IMR-90 (cell line): ENCODE measurements at regions of chr10 and their contacts with region 1.

Region 1: GRCh38 chr10:27446091-27446918 is 57.8 kb upstream of the RAB18 start:
- DNase-seq: peak; percentile 47
- ATAC-seq: peak; percentile 90
- H3K4me3 ChIP-seq: no peak overlapping the region
- H3K27ac ChIP-seq: peak overlapping the region; percentile 74; the same call in 1 of the 2 replicates
- H3K4me1 ChIP-seq: no peaks in the 10 kb centered on the region
- H3K27me3 ChIP-seq: no peaks in the 10 kb centered on the region; the same call in 1 of the 2 replicates
- CTCF ChIP-seq: peak; percentile 56
- POLR2A ChIP-seq: no peak
- RAD21 ChIP-seq: peak; percentile 44

Region 2: DNA sequence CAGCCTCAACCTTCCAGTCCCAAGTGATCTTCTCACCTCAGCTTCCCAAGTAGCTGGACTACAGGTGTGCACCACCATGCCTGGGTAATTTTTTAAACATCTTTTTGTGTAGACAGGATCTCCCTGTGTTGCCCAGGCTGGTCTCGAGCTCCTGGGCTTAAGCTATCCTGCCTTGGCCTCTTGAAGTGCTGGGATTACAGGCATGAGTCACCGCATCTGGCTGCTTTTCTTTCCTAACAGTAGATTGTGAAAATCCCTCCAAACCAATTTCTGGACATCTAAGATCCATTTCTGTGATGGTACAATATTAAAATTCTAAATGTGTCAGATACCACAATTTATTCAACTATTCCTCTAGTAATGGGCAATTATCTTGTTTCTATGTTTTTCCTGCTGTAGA is 96.5 kb after region 1 on chr10:
- CTCF ChIA-PET with region 1: no interaction called
- POLR2A ChIA-PET with region 1: no interaction called
- dilution Hi-C with region 1: no loop called
- in situ Hi-C with region 1: no loop called
- intact Hi-C with region 1: loop called (anchors 10 kb)
- DNase-seq: peak; percentile 68
- ATAC-seq: peak; percentile 87
- H3K4me3 ChIP-seq: no peak overlapping the region
- H3K27ac ChIP-seq: no peak overlapping the region
- H3K4me1 ChIP-seq: peaks cover 2% of the 10 kb centered on the region
- H3K27me3 ChIP-seq: no peaks in the 10 kb centered on the region
- CTCF ChIP-seq: no peak
- POLR2A ChIP-seq: no peak
- RAD21 ChIP-seq: no peak

Region 3: GRCh38 chr10:27661514-27662286 is 215.4 kb after region 1 on chr10:
- CTCF ChIA-PET with region 1: no interaction called
- POLR2A ChIA-PET with region 1: no interaction called
- dilution Hi-C with region 1: no loop called
- in situ Hi-C with region 1: no loop called
- intact Hi-C with region 1: loop called (anchors 1 kb)
- DNase-seq: no peak
- ATAC-seq: no peak
- H3K4me3 ChIP-seq: no peak overlapping the region
- H3K27ac ChIP-seq: no peak overlapping the region
- H3K4me1 ChIP-seq: peaks cover 2% of the 10 kb centered on the region; the same call in 1 of the 2 replicates
- H3K27me3 ChIP-seq: peaks cover 2% of the 10 kb centered on the region; the same call in 1 of the 2 replicates
- CTCF ChIP-seq: no peak
- POLR2A ChIP-seq: no peak
- RAD21 ChIP-seq: no peak

Region 4: DNA sequence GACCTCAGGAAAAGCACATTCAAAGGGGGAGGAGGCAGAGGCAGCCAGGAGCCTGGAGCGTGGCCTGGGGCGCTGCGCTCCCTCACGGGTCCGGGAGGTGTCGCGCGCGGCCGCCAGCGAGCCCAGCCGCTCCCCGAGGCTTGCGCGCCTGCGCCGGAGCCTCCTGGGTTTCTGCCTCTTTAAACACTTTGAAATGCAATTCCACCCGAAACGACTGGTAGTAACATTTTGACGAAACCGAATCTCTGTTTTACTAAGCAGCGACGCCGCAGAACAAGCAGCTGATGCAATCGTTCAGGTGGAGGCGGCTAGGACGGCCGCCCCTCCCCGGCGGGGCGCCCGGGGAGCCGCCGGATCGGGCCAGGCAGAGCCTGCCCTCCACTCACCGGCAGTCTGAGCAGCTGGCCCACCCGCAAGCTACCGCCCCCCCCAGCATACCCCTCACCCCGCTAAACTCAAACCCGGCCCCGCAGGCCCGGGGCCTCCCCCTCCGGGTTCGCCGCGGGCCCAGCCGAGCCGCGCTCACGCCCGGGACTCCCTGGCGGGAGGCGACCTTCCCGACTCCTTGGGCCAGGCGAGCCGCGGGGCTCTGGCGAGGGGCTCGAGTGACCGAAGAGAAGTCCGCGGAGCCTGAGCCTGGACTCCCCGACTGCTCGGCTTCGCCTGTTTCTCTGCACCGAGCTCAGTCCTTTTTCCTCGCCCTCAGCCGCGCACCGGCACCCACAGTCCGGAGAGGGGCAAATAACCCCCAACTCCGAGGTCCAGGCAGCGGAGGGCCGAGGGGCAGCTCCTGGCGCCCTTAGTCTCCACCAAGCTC is 296.1 kb after region 1 on chr10:
- CTCF ChIA-PET with region 1: no interaction called
- POLR2A ChIA-PET with region 1: no interaction called
- dilution Hi-C with region 1: no loop called
- in situ Hi-C with region 1: no loop called
- intact Hi-C with region 1: loop called (anchors 1 kb)
- DNase-seq: peak; percentile 85
- ATAC-seq: peak; percentile 85
- H3K4me3 ChIP-seq: peak overlapping the region; percentile 33
- H3K27ac ChIP-seq: peak overlapping the region; percentile 38
- H3K4me1 ChIP-seq: peaks cover 3% of the 10 kb centered on the region; the same call in 1 of the 2 replicates
- H3K27me3 ChIP-seq: peaks cover 46% of the 10 kb centered on the region
- CTCF ChIP-seq: peak; percentile 89
- POLR2A ChIP-seq: peak; percentile 61
- RAD21 ChIP-seq: peak; percentile 83

Region 5: GRCh38 chr10:28137907-28138880 is 691.9 kb after region 1 on chr10:
- CTCF ChIA-PET with region 1: no interaction called
- POLR2A ChIA-PET with region 1: no interaction called
- dilution Hi-C with region 1: no loop called
- in situ Hi-C with region 1: no loop called
- intact Hi-C with region 1: no loop called
- DNase-seq: peak; percentile 59
- ATAC-seq: no peak; the same call in none of the 2 replicates
- H3K4me3 ChIP-seq: no peak overlapping the region
- H3K27ac ChIP-seq: no peak overlapping the region
- H3K4me1 ChIP-seq: peaks cover 2% of the 10 kb centered on the region; the same call in 1 of the 2 replicates
- H3K27me3 ChIP-seq: no peaks in the 10 kb centered on the region
- CTCF ChIP-seq: no peak
- POLR2A ChIP-seq: no peak
- RAD21 ChIP-seq: no peak